OCI-LY7 (cell line): ENCODE measurements at regions of chr13 and their contacts with region 1.

Region 1: GRCh38 chr13:81203783-81204182 is 862.9 kb upstream of the SPRY2 start:
- DNase-seq: no peak
- H3K4me3 ChIP-seq: no peak overlapping the region
- H3K27ac ChIP-seq: no peak overlapping the region
- H3K4me1 ChIP-seq: no peaks in the 10 kb centered on the region
- CTCF ChIP-seq: no peak

Region 2: DNA sequence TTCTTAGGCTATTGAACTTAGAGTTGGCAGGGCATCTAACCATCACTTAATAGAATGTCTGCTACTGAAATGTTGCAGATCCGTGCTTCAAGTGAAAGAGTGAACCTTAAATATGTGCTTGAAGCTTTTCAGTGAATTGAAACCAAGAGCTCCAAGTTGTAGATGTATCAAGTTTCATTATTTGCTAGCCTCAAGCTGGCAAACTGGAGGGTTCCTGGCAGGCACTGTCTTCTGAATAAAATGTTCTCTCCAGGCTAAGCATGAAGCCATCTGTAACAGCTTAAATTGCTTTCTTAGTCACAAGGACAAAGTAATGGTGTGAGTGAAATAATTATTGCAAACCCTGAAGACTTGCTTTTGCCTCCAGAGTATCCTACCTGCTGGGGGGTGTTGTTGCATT is 447.9 kb before region 1 on chr13:
- CTCF ChIA-PET with region 1: no interaction called
- POLR2A ChIA-PET with region 1: no interaction called
- intact Hi-C with region 1: no loop called
- DNase-seq: no peak
- H3K4me3 ChIP-seq: no peak overlapping the region
- H3K27ac ChIP-seq: no peak overlapping the region
- H3K4me1 ChIP-seq: no peaks in the 10 kb centered on the region
- CTCF ChIP-seq: no peak

Region 3: DNA sequence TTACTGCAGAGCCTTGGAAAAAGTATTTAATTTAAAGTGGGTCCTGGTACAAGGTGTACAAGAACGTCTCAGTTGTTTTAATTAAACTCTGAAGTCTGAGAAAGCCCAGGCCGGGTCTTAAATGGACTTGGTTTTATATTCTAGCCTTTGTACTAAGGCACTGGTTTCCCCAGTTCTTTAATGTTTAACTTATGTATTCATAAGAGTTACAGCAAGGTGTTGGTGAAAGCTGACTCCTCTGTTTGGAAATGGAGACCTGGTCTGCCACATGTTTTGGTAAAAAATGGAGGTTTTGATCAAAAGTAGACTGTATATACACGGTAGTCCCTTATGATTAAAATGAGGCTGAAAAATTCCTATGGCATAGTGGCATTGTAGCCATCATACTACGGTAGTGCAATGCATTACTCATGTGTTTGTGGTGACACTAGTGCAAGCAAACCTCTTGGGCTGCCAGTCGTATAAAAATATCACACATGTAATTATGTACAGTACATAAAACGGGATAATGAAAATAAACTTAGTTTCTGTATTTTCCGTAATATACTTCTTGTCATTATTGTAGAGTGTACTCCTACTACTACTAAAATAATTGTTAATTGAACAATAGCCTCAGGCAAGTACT is 20.5 kb after region 1 on chr13:
- CTCF ChIA-PET with region 1: no interaction called
- POLR2A ChIA-PET with region 1: no interaction called
- intact Hi-C with region 1: loop called (anchors 1 kb)
- DNase-seq: no peak
- H3K4me3 ChIP-seq: no peak overlapping the region
- H3K27ac ChIP-seq: no peak overlapping the region
- H3K4me1 ChIP-seq: no peaks in the 10 kb centered on the region
- CTCF ChIP-seq: no peak

Region 4: GRCh38 chr13:81275666-81276258 is 72.0 kb after region 1 on chr13:
- CTCF ChIA-PET with region 1: no interaction called
- POLR2A ChIA-PET with region 1: no interaction called
- intact Hi-C with region 1: no loop called
- DNase-seq: peak; percentile 3
- H3K4me3 ChIP-seq: no peak overlapping the region
- H3K27ac ChIP-seq: no peak overlapping the region
- H3K4me1 ChIP-seq: no peaks in the 10 kb centered on the region
- CTCF ChIP-seq: no peak